BJ (cell line): ENCODE measurements at regions of chr20 and their contacts with region 1.

Region 1: DNA sequence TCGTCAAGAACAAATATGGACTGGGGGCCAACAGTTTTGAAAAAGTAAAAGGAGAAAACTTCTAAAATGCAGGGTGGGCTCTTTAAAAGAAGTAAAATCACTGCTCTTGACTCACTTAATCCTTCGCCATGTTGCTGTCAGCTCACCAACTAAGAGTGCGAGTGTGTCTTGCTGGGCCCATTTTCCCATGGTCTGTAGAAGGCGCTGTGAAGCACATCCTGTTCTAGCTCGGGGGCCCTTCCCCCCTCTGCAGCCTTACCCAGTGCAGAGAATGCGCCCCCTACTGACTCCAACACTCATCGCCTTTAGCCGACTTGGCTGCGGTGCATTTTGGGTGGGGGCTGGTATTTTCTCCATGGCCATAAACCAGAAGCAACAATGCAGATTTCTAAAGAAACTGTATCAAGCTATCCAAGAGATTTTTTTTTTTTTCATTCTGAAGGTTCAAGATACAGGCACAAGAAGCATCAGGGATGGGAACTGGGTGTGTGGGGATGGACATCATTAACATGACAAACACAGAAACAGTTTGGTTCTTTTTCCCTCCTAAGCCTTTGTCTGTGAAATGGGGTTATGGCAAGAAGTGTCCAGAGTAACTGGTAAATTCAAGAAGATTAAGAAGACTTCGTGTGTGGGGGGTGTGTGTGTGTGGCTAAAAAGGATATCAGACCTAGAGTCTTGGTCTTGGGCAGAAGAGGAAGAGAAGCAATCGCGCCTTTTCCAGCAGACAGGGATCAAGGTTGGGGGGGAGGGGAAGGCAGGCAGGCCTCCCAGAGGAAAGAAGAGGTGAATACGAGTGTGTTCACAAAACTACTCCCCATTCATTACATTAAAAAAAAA is 1.7 kb downstream of the ADNP start:
- DNase-seq: peak; percentile 70
- H3K4me3 ChIP-seq: peak overlapping the region; percentile 93
- H3K27me3 ChIP-seq: no peaks in the 10 kb centered on the region
- CTCF ChIP-seq: peak; percentile 99

Region 2: GRCh38 chr20:50815162-50815989 is 114.1 kb before region 1 on chr20:
- CTCF ChIA-PET with region 1: interaction called, 33 read pairs
- POLR2A ChIA-PET with region 1: no interaction called
- DNase-seq: no peak
- H3K4me3 ChIP-seq: no peak overlapping the region
- H3K27me3 ChIP-seq: no peaks in the 10 kb centered on the region
- CTCF ChIP-seq: no peak

Region 3: GRCh38 chr20:50824193-50824632 is 105.3 kb before region 1 on chr20:
- CTCF ChIA-PET with region 1: interaction called, 33 read pairs
- POLR2A ChIA-PET with region 1: no interaction called
- DNase-seq: peak; percentile 64
- H3K4me3 ChIP-seq: no peak overlapping the region
- H3K27me3 ChIP-seq: no peaks in the 10 kb centered on the region
- CTCF ChIP-seq: no peak

Region 4: GRCh38 chr20:50895111-50895830 is 34.2 kb before region 1 on chr20:
- CTCF ChIA-PET with region 1: interaction called, 11 read pairs
- POLR2A ChIA-PET with region 1: no interaction called
- DNase-seq: no peak
- H3K4me3 ChIP-seq: no peak overlapping the region
- H3K27me3 ChIP-seq: no peaks in the 10 kb centered on the region
- CTCF ChIP-seq: no peak

Region 5: GRCh38 chr20:50913690-50914375 is 15.7 kb before region 1 on chr20:
- CTCF ChIA-PET with region 1: interaction called, 31 read pairs
- POLR2A ChIA-PET with region 1: interaction called, 4 read pairs
- DNase-seq: no peak
- H3K4me3 ChIP-seq: no peak overlapping the region
- H3K27me3 ChIP-seq: no peaks in the 10 kb centered on the region
- CTCF ChIP-seq: no peak

Region 6: DNA sequence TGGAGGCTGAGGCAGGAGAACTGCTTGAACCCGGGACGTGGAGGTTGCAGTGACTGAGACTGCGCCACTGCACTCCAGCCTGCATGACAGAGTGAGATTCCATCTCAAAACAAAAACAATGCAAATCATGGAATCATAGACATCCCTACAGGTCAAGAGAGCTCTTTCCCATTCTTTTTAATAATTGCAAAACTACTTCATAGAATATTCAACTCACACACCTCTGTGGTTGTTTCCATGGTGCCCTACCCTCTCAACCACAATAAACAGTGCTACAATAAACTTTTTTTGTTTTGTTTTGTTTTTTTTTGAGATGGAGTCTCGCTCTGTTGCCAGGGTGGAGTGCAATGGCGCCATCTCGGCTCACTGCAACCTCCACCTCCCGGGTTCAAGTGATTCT is 13.6 kb after region 1 on chr20:
- CTCF ChIA-PET with region 1: interaction called, 11 read pairs
- POLR2A ChIA-PET with region 1: no interaction called
- DNase-seq: no peak
- H3K4me3 ChIP-seq: no peak overlapping the region
- H3K27me3 ChIP-seq: no peaks in the 10 kb centered on the region
- CTCF ChIP-seq: no peak